Lower lobe of right lung (tissue), 2 donors: ENCODE measurements at regions of chr19 and their contacts with region 1.

Region 1: GRCh38 chr19:47124937-47125668 is 5.5 kb upstream of the SAE1 start:
- DNase-seq: no peak
- ATAC-seq: peak; percentile 84 to 86
- H3K4me3 ChIP-seq: no peak overlapping the region
- H3K27ac ChIP-seq: peak overlapping the region; percentile 31
- H3K4me1 ChIP-seq: no peaks in the 10 kb centered on the region
- H3K27me3 ChIP-seq: no peaks in the 10 kb centered on the region
- CTCF ChIP-seq: peak; percentile 57

Region 2: DNA sequence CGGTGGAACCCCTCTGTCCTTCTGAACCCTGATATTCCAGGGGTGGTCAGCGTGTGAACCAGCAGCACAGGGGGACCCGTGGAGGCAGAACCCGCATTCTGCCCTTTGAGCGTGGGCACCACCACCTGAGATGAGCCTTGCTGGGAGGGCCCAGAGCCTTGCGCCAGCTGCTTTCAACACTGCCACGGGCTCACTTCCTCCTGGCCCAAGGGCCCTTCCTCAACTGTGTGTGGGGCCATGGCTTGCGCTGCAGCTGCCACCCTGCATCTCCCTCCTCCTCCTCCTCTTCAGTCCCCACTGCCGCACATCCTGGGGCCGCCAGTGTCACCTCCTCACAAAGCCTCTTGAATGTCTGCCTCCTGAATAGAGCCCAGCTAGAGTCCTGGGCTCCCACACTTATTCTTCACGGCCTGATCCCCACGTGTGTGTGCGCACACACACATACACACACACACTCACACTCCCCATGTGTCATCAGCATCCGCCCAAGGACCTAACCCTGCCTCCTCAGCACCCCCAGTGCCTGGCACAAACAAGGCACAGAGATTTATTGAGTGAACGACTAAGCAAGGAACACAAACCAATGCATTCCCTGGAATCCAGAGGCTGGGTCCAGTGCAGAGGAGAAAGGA is 49.8 kb before region 1 on chr19:
- intact Hi-C with region 1: loop called (anchors 10 kb)
- DNase-seq: peak; percentile 74
- ATAC-seq: peak; percentile 40 to 53
- H3K4me3 ChIP-seq: no peak overlapping the region
- H3K27ac ChIP-seq: no peak overlapping the region
- H3K4me1 ChIP-seq: peaks cover 4% of the 10 kb centered on the region
- H3K27me3 ChIP-seq: no peaks in the 10 kb centered on the region
- CTCF ChIP-seq: no peak